OCI-LY7 (cell line): ENCODE measurements at regions of chr9 and their contacts with region 1.

Region 1: DNA sequence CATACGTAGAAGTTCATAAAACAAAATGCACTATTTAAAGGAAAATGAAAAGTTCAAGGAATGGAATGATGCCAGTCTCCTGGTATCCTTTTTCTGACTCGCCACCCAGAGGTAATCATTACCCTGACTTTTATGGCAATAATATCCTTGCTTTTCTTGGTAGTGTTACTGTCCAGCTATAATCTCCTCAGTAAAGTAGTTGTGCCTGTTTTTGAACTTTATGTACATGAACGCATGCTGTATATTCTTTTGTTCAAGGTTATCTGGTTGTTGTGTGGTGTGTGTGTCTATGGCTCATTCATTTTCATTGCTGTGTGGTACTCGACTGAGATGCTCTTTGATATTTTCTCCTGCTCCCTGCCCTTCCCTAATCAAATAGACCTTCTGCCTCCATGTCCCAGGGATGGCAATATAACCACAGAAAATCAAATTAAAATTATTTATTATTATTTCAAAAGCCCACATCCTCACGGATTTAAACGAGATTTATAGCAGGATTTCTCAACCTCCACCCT is 29.2 kb upstream of the FBP1 start:
- DNase-seq: no peak
- H3K4me3 ChIP-seq: no peak overlapping the region
- H3K27ac ChIP-seq: no peak overlapping the region
- H3K4me1 ChIP-seq: peaks cover 9% of the 10 kb centered on the region
- CTCF ChIP-seq: no peak

Region 2: DNA sequence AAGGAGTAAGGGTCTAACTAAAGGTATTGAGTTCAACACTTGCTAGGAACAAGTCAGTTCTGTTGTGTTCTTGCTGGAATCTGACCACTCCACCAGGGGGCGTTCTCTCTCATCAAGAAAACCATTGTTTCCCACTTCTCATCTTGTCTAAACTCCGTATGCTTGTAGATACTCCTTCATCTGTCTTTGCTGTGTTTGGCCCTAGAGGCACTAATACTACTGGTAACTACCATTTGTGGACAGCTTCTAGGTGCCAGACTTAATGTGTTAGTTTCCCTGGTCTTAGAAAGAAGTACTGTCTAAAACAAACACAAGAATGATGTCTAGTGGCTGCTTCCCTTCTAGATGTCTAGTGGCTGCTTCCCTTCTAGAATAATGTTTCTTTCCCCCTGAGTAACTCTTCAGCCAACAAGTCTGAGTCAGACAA is 602.9 kb before region 1 on chr9:
- CTCF ChIA-PET with region 1: no interaction called
- POLR2A ChIA-PET with region 1: no interaction called
- intact Hi-C with region 1: no loop called
- DNase-seq: peak; percentile 83
- H3K4me3 ChIP-seq: no peak overlapping the region
- H3K27ac ChIP-seq: no peak overlapping the region
- H3K4me1 ChIP-seq: no peaks in the 10 kb centered on the region
- CTCF ChIP-seq: peak; percentile 95

Region 3: DNA sequence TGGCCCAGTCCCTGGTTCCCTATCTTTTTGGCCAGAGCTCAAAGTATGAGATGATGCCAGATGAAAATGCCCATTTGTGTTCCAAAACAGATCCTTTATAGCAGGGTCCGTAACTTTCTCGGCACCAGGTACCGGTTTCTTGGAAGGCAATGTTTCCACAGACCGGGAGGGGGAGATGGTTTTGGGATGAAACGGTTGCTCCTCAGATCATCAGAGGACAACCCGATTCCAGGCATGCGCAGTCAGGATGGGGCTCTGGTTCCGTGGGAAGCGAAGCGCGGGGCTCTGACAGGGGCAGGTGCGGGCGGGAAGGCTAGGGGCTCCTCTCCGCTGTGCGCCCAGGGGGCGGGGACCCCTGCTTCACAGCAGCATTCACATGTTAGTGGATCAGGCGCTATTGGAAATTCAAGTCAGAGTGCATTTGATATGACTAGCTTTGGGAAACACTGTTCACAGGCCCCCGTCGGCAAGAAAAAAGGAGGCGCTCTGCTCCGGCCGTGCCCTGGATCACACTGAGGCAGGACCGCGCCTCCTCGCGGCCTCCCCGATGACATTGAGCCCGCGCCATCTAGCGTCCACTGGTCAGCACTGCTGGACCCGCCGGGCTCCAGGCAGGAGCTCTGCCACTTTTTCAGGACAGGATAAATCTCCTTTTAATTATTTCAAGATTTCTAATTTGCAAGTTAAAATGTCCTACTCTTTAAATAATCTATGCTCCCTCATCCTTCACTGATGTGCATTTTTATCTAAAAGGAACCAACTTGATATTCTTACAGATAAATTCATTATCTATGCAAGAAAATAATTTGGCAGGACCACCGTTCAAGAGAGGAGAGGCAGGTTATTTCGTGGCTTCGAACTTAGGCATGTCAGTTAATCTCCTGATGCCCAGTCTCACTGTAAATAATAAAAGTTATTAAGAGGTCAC is 459.0 kb after region 1 on chr9:
- CTCF ChIA-PET with region 1: no interaction called
- POLR2A ChIA-PET with region 1: no interaction called
- intact Hi-C with region 1: loop called (anchors 5 kb)
- DNase-seq: peak; percentile 62
- H3K4me3 ChIP-seq: no peak overlapping the region
- H3K27ac ChIP-seq: no peak overlapping the region
- H3K4me1 ChIP-seq: no peaks in the 10 kb centered on the region
- CTCF ChIP-seq: peak; percentile 85